ENCODE measurements at regions of chr1 and their contacts with region 1.

Region 1: DNA sequence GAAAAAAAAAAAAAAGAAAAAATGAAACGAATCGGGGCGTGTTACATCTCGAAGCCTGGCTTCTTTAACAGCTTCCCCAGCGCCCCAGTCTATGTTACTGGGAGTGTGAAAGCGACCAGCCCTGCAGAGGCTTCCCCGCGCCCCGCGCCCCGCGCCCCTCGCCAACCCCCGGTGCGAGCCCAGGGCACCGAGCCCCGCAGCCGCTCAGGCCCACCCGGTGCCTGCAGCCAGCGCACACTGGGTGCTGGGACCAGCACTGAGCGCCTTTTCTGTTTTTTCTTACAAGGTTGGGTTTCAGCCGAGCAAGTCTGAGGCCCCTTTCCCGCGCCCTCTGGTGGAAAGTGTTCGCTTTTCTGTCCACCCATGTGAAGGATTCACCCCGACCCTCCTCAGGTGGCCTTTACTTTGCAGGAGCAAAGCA is 42.1 kb upstream of the ZNF496 start:
- DNase-seq: peak; percentile 52
- ATAC-seq: peak; percentile 87
- H3K4me3 Mint-ChIP-seq: peak overlapping the region; percentile 32
- H3K27ac Mint-ChIP-seq: no peak overlapping the region
- H3K4me1 Mint-ChIP-seq: peaks cover 7% of the 10 kb centered on the region
- H3K27me3 Mint-ChIP-seq: peaks cover 11% of the 10 kb centered on the region
- CTCF ChIP-seq: no peak

Region 2: DNA sequence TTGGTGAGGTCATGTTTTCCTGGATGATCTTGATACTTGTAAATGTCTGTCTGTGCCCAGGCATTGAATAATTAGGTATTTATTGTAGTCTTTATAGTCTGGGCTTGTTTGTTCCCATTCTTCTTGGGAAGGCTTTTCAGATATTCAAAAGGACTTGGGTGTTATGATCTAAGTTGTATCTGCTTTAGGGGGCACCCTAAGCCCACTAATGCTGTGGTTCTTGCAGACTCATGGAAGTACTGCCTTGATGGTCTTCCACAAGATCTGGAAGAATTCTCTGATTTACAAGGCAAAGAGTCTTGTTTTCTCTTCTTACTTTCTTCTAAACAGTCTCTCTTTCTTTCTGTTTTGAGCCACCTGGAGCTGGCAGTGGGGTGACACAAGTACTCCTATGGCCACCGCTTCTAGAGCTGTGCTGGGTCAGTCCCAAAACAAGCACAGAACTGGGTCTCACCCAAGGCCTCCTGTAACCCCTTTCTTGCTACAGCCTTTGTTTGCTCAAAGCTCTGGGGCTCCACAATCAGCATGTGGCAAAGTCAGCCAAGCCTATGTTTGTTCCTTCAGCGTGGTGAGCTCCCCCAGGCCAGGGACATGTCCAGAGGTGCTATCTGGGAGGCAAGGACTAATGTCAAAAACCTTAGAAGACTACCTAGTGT is 105.2 kb before region 1 on chr1:
- CTCF ChIA-PET with region 1: no interaction called
- POLR2A ChIA-PET with region 1: no interaction called
- intact Hi-C with region 1: loop called (anchors 2 kb)
- DNase-seq: no peak
- ATAC-seq: no peak
- H3K4me3 Mint-ChIP-seq: no peak overlapping the region
- H3K27ac Mint-ChIP-seq: no peak overlapping the region
- H3K4me1 Mint-ChIP-seq: no peaks in the 10 kb centered on the region
- H3K27me3 Mint-ChIP-seq: peaks cover 7% of the 10 kb centered on the region
- CTCF ChIP-seq: no peak

Region 3: DNA sequence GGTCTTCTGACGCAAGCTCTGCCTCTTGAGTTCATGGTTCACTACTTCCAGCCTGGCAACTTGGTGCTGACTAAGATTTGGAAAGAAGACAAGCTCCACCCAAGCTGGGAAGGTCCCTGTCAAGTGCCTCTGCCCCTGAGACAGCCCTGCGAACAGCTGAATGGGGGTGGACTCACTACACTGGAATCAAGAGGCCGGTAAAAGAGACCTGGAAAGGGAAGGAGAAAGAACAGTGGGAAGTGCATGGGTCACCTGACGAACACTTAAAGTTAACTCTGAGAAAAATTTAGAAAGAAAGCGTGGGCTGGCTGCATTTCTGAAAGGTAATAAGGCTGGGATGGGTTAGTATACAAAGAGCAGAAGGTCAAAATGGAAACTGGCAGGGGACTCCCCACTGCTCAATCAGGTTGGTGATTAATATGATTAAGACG is 15.9 kb before region 1 on chr1:
- CTCF ChIA-PET with region 1: interaction called, 11 read pairs
- POLR2A ChIA-PET with region 1: interaction called, 3 read pairs
- intact Hi-C with region 1: no loop called
- DNase-seq: no peak
- ATAC-seq: peak; percentile 93
- H3K4me3 Mint-ChIP-seq: peak overlapping the region; percentile 64
- H3K27ac Mint-ChIP-seq: peak overlapping the region; percentile 61
- H3K4me1 Mint-ChIP-seq: peaks cover 26% of the 10 kb centered on the region
- H3K27me3 Mint-ChIP-seq: peaks cover 39% of the 10 kb centered on the region
- CTCF ChIP-seq: no peak

Region 4: DNA sequence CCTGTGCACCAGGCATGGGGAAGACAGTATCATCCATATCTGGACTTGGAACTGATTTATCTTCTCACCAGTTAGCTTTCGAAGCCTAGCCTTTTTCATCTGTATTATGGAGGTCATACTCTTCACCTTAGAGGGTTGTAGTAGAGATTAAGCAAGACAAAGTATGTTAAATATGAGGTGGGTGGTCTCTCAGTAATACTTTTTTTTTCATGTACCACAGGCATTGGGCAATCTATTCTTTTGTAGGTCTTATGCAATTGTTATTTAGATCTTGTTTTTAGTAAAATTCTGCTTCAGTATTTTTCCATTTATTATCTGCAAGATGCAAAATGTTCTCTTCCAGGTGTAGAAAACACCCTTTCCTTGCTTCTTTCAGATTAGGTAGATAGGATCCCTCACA is 119.4 kb after region 1 on chr1:
- CTCF ChIA-PET with region 1: interaction called, 149 read pairs
- POLR2A ChIA-PET with region 1: no interaction called
- intact Hi-C with region 1: no loop called
- DNase-seq: no peak
- ATAC-seq: no peak
- H3K4me3 Mint-ChIP-seq: no peak overlapping the region
- H3K27ac Mint-ChIP-seq: no peak overlapping the region
- H3K4me1 Mint-ChIP-seq: no peaks in the 10 kb centered on the region
- H3K27me3 Mint-ChIP-seq: peaks cover 17% of the 10 kb centered on the region
- CTCF ChIP-seq: no peak